ENCODE measurements at regions of chr9 and their contacts with region 1.

Region 1: DNA sequence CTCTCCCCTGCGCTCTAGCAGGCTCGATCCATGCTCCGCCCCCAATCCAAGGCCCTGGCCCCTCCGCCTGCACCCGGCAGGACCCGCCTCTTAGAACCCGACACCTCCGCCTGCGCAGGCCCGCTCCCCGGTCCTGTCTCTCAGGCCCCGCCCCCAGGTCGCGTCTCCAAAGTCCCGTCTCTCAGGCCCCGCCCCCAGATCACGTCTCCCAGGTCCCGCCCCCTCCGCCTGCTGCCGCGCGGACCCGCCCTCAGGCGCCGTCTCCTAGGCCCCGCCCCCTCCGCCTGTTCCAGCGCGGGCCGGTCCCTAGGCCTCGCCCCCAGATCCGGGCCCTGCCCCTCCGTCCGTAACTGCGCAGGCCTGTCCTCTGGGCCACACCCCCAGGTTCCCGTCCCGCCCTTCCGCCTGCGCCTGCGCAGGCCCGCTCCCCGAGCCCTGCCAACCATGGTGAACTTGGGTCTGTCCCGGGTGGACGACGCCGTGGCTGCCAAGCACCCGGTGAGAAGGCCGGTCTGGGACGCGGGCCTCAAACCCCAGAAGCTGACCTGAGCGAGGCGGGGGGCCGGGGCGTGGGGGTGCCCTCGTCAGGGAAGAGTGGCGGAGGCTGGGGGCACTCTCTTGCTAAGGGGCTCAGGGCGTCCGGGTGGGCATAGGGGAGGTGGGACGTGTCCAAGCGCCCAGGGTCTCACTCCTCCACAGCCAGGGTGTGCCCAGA is at the start of gene TMEM141:
- DNase-seq: peak; percentile 97 to 100 (median 100)
- ATAC-seq: peak; percentile 87
- H3K4me3 Mint-ChIP-seq: peak within 1 kb of the TSS; percentile 83 to 92 (median 86)
- H3K27ac Mint-ChIP-seq: peak within 1 kb of the TSS; percentile 70 to 98 (median 96)
- H3K4me1 Mint-ChIP-seq: peaks cover 5 to 38% (median 34%) of the 10 kb centered on the region in 4 donors
- H3K27me3 Mint-ChIP-seq: peaks cover 0 to 5% (median 0%) of the 10 kb centered on the region in 5 donors
- polyA plus RNA-seq, gene TMEM141: 34.2 to 40.5 (median 37.3) TPM

Region 2: GRCh38 chr9:136807281-136808074 is 16.4 kb after region 1 on chr9 and contains the start of gene RABL6:
- POLR2A ChIA-PET with region 1: interaction called, 44 read pairs
- DNase-seq: peak; percentile 72 to 89 (median 84)
- ATAC-seq: peak; percentile 86 to 88
- H3K4me3 Mint-ChIP-seq: peak within 1 kb of the TSS; percentile 84 to 94 (median 88)
- H3K27ac Mint-ChIP-seq: peak within 1 kb of the TSS; percentile 72 to 97 (median 92)
- H3K4me1 Mint-ChIP-seq: peaks cover 16 to 48% (median 42%) of the 10 kb centered on the region in 4 donors
- H3K27me3 Mint-ChIP-seq: no peaks in the 10 kb centered on the region
- polyA plus RNA-seq, gene RABL6: 11.6 to 17.2 (median 11.9) TPM

Measured in naive thymus-derived CD8-positive, alpha-beta T cell (primary cell).